BJ (cell line): ENCODE measurements at regions of chr16 and their contacts with region 1.

Region 1: DNA sequence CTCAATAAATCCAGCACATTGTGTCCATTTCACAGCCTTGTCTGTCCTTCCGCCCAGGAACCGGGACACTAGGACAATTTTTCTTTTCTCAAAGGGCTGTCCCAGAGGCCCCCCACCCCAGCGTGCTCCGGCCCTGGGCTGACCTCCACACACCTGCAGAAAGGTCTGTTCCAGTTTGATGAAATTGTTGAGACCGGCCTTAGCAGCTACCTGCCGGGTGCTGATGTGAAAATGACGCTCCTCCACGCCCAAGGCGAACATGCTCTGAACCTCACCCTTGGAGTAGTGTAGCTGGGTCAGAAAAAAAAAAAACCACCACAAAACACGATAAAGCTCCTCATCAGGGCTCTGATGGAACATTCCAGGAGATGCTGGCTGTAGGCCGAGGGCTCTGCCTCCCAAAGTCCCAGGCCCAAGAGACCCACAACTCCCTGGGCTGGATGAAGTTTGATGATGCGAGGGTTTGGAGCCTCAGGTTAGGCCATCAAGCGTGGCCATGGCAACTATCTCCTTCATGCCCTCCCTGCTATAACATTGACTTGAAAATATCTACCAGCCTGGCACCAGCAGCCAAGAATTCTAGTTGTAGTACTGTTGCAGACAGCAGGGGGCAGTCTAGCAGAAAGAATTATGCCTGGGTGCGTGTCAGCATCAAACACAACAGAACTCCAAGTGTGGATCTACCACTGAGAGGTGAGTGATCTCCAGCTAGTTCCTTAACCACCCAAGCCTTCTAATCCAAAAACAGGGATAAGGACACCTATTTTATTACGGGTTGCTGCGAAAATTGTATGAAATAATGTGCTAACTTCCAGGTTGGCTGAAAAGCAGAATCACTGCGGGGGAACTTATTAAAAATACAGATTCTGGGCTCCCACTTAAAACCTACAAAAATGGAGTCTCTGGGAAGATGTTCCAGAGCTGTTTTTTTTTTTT is 62.1 kb downstream of the RMI2 start:
- DNase-seq: peak; percentile 7
- H3K4me3 ChIP-seq: no peak overlapping the region
- H3K27me3 ChIP-seq: 0 out of 2 replicates have a peak, but pooled peaks cover 1% of the 10 kb centered on the region
- CTCF ChIP-seq: peak; percentile 66

Region 2: DNA sequence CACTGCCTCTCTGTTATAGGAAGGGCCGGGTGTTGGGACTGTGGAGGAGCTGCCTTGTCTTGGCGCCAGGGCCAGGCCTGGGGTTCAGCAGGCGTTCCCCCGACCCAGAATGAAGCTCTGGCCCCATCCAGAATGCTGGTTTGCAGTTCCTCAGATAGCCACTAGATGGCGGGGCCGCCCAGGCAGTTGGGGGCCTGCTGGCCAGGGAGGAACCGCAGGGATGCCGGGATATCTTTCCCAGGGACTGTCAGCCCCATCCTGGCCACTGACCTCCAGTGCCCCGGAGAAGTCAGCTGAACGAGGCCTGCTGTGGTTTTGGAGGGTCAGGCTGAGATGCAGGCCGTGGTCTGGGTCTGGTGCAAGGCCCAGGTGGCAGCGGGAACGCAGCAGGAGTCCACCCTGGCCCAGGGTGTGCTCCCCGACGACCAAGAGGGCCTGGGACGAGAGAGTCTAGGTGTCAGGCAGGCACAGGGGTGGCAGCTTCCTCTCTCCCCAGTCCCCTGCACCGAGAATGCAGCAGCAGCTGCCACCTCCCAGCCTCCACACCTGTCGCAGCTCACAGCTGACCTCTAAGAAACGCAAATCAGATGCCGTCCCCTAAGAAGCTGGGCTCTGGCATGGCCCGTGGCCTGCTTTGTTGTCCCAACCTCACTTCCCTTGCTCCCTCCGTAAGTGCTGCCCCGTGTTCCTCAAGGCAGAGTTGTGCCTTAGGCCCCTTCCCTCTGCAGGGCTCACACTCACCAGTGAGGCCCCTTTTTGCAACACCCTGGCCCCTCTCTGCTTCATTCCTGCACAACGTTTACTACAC is 10.9 kb before region 1 on chr16:
- CTCF ChIA-PET with region 1: interaction called, 75 read pairs
- POLR2A ChIA-PET with region 1: no interaction called
- DNase-seq: no peak
- H3K4me3 ChIP-seq: no peak overlapping the region
- H3K27me3 ChIP-seq: 0 out of 2 replicates have a peak, but pooled peaks cover 2% of the 10 kb centered on the region
- CTCF ChIP-seq: peak; percentile 99

Region 3: DNA sequence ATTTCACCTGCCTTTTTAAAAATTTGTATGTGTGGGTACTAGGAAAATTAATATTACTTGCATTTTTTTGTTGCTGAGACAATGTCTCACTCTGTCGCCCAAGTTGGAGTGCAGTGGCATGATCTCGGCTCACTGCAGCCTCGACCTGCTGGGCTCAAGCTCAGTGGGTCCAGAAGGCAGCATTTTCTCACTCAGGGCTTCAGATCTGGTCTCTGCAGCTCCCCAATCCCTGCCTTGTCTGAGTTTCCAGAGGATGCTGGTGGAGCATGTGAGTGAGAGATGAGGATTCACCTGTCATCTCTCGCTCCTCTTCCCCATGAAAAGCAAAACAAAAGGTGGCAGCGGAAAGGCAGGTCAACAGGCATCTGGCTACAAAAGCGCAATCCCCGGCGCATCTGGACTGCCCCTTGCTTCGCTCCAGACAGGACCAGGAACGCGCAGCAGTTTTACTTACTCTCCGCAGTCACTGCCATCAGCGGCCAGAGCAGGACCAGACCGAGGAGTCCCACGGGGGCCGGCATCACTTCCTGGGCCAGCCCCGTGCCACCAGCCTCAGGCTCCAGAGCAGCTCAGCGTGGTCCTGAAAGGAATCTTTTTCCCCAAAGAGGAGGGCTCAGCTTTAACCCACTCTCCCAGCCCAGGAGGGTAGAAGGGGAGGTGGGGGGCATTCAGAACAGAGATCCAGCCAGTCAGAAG is 119.5 kb after region 1 on chr16:
- CTCF ChIA-PET with region 1: interaction called, 10 read pairs
- POLR2A ChIA-PET with region 1: no interaction called
- DNase-seq: no peak
- H3K4me3 ChIP-seq: no peak overlapping the region
- H3K27me3 ChIP-seq: peaks cover 4% of the 10 kb centered on the region; the same call in 1 of the 2 replicates
- CTCF ChIP-seq: no peak

Region 4: DNA sequence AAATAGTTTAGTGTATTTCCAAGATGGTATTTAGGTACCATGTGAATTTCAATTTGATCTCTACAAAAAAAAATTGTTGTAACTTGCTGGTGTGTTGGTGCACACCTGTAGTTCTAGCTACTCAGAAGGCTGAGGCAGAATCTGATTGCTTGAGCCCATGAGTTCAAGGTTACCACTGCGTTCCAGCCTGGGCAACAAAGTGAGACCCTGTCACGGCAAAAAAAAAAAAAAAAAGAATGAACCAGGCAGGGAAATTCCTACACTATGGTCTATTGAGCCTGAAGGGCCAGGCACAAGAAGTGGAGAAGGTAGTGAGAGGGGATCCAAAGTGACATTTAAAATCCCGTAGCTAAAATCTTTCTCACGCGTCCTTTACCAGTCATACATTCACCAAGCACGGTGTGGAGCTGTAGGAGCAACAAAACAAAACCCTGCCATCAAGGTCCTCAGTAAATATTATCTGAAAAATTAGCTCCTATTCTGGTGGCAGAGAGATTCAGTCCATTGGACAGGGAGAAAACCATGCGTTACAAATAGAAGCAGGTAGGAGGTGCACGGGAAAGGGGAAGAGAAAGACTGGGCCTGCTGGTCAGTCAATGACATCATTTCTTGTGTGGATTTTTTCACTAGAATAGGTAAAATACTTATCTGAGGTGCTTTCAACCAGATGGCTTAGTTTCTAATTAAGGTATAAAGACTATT is 308.1 kb after region 1 on chr16:
- CTCF ChIA-PET with region 1: interaction called, 12 read pairs
- POLR2A ChIA-PET with region 1: no interaction called
- DNase-seq: no peak
- H3K4me3 ChIP-seq: no peak overlapping the region
- H3K27me3 ChIP-seq: no peaks in the 10 kb centered on the region
- CTCF ChIP-seq: no peak